HAP-1 (cell line): ENCODE measurements at regions of chr22 and their contacts with region 1.

Region 1: DNA sequence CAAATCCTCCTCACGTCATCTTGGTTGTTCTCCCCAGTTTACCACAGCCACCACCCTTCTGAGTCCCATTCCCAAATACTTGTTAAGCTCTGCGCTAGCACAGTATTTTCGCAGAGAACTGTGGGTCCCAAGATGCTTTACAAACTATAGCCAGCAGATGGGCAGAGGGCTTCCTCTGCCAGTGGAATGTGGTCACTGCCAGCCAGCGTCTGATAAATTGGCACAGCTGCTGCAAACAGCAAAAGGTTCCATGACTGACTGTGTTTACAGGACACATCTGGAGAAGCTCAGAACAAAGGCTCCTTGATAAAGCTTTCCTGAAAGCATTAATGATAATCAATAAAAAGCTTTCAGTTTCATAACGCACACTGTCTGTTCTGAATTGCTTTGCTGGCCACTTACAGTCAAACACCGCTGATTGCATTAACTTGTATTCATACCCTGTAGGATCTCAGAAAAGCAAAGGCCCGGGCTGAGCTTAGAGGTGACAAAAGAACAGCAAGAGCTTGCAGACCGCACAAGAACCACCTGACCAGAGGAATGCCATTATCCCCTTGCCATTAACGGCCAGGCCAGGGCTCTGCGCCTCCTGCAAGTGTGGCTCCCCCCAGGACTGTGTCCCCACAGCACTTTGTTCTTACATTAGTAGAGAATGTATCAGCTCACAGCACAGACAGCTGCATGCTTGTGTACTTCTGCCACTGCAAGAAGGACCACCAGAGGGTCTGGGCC is 120.6 kb downstream of the MICAL3 start:
- DNase-seq: no peak
- H3K4me3 ChIP-seq: no peak overlapping the region
- H3K4me1 ChIP-seq: no peaks in the 10 kb centered on the region
- H3K27me3 ChIP-seq: no peaks in the 10 kb centered on the region

Region 2: GRCh38 chr22:17830043-17830961 is 73.4 kb before region 1 on chr22:
- in situ Hi-C with region 1: no loop called
- DNase-seq: peak; percentile 38 to 88
- H3K4me3 ChIP-seq: no peak overlapping the region
- H3K4me1 ChIP-seq: no peaks in the 10 kb centered on the region
- H3K27me3 ChIP-seq: no peaks in the 10 kb centered on the region

Region 3: DNA sequence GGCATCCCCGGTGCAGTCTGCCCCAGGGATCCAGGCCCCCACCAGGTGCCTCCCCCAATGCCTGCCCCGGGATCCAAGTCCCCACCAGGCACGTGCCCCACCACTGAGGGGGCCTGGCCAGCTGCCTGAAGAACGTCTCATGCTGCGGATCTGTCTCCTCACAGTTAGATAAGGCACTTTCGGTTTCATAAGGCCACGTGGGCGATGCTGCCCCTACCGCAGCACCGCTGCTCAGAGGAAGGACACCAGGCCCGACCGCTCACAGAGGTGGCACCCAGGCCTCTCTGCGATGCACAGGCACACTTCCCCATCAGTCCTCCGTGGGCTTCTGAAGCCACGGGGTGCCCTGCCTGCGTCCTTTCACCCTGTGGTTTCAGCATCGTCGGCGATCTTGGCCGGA is 61.3 kb before region 1 on chr22:
- in situ Hi-C with region 1: loop called (anchors 10 kb)
- DNase-seq: no peak
- H3K4me3 ChIP-seq: no peak overlapping the region
- H3K4me1 ChIP-seq: no peaks in the 10 kb centered on the region
- H3K27me3 ChIP-seq: no peaks in the 10 kb centered on the region